ENCODE measurements at regions of chr1 and their contacts with region 1.

Region 1: DNA sequence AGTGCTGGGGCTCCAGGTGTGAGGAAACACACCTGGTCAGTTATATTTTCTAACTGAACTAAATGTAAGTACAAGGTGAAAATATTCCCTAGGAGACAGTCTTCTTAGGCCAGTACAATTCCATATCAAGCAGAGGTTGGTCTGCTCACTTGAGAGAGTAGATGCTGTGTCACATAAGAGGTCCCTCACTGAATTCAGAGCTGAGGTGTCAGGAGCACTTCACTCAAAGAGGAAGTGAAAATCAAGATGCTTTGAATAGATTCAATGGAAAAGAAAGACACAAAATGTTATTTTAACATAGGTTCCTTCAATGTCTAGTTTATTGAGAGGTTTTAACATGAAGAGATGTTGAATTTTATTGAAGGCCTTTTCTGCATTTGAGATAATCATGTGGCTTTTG is 4.3 kb upstream of the FCRL3 start:
- DNase-seq: no peak
- H3K4me3 ChIP-seq: no peak overlapping the region
- H3K27ac ChIP-seq: no peak overlapping the region
- H3K4me1 ChIP-seq: no peaks in the 10 kb centered on the region
- H3K27me3 ChIP-seq: peaks cover 9% of the 10 kb centered on the region; the same call in 1 of the 2 replicates
- CTCF ChIP-seq: no peak
- EP300 ChIP-seq: no peak
- RAD21 ChIP-seq: no peak

Region 2: DNA sequence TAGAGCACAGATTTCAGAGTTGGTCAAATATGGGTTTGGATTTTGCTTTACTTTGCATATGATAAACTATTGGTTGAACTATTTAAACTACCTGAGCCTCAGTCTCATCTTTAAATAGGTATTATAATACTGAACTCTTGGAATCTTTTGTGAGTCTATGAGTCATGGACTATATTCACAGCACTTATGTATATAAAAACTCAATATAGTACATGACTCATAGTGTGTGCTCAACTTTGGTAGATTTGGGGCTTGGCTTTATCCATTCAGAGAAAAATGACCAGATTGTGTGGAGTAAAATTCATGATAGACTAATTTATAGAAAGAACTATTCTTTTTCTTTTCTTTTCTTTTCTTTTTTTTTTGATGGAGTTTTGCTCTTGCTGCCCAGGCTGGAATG is 33.0 kb before region 1 on chr1:
- CTCF ChIA-PET with region 1: no interaction called
- POLR2A ChIA-PET with region 1: no interaction called
- DNase-seq: no peak
- H3K4me3 ChIP-seq: no peak overlapping the region
- H3K27ac ChIP-seq: no peak overlapping the region
- H3K4me1 ChIP-seq: no peaks in the 10 kb centered on the region
- H3K27me3 ChIP-seq: no peaks in the 10 kb centered on the region
- CTCF ChIP-seq: no peak
- EP300 ChIP-seq: no peak
- RAD21 ChIP-seq: no peak

Region 3: GRCh38 chr1:157691285-157691920 is 13.5 kb before region 1 on chr1:
- CTCF ChIA-PET with region 1: interaction called, 21 read pairs
- POLR2A ChIA-PET with region 1: no interaction called
- DNase-seq: peak; percentile 42
- H3K4me3 ChIP-seq: no peak overlapping the region
- H3K27ac ChIP-seq: no peak overlapping the region
- H3K4me1 ChIP-seq: no peaks in the 10 kb centered on the region; a peak in 1 of 4 replicates
- H3K27me3 ChIP-seq: peaks cover 5% of the 10 kb centered on the region
- CTCF ChIP-seq: peak; percentile 59
- EP300 ChIP-seq: no peak
- RAD21 ChIP-seq: peak; percentile 37

Region 4: GRCh38 chr1:157723157-157723556 is 18.3 kb after region 1 on chr1:
- CTCF ChIA-PET with region 1: no interaction called
- POLR2A ChIA-PET with region 1: no interaction called
- DNase-seq: no peak
- H3K4me3 ChIP-seq: no peak overlapping the region
- H3K27ac ChIP-seq: no peak overlapping the region
- H3K4me1 ChIP-seq: no peaks in the 10 kb centered on the region
- H3K27me3 ChIP-seq: no peaks in the 10 kb centered on the region
- CTCF ChIP-seq: no peak
- EP300 ChIP-seq: no peak
- RAD21 ChIP-seq: no peak

Region 5: DNA sequence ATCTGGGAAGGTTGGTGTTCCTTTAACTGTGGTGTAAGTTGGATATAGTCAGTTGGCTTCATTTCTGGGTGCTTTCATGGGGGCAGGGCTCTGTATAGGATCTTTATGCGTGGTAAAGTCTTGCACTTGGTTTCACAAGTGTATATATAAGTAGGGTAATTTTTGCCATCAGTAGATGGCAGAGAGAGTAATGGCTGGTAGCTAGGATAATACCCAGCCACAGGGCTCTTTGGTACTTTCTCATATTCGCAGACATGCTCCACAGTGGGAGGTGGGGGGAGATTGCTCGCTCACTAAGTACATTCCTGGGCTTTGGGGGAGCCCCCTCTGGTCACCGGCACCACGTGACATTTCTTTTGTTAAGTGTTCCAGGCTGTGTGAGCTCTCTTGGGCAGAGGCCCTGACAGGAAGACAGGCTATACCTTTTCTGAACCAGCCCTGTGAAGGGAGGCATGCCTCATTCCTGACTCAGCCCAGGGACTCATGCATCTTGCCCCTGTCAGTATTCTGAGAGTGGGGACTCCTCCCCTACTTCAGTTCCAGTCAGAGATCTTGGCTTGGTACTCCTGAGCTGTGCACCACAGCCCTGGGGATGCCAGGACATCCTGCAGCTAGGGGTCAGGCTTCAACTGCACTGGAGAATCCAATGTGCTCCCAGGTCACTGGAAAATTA is 34.5 kb after region 1 on chr1:
- CTCF ChIA-PET with region 1: no interaction called
- POLR2A ChIA-PET with region 1: no interaction called
- DNase-seq: no peak
- H3K4me3 ChIP-seq: no peak overlapping the region
- H3K27ac ChIP-seq: no peak overlapping the region
- H3K4me1 ChIP-seq: no peaks in the 10 kb centered on the region
- H3K27me3 ChIP-seq: no peaks in the 10 kb centered on the region
- CTCF ChIP-seq: no peak
- EP300 ChIP-seq: no peak
- RAD21 ChIP-seq: no peak

Region 6: DNA sequence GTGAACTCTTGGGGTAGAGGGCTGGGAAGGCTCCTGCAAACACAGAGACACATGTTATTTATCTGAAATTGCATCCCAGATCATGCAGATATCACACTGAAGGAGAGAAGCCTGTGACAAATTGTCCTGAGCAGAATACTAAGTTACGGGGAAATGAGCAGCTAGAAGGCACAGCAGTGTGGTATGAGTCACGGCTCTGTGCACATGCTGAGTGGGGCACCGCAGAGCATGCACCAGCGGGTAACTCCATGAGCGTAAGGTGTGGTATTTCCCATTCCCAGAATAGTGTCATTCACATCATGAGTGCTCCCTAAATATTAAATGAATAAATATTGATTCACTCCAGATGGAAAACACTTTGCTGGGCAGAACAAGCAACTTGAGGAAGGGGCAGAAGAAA is 93.3 kb after region 1 on chr1:
- CTCF ChIA-PET with region 1: no interaction called
- POLR2A ChIA-PET with region 1: no interaction called
- DNase-seq: no peak
- H3K4me3 ChIP-seq: no peak overlapping the region
- H3K27ac ChIP-seq: no peak overlapping the region
- H3K4me1 ChIP-seq: no peaks in the 10 kb centered on the region
- H3K27me3 ChIP-seq: no peaks in the 10 kb centered on the region; the same call in 1 of the 2 replicates
- CTCF ChIP-seq: no peak
- EP300 ChIP-seq: no peak
- RAD21 ChIP-seq: no peak

Measured in SK-N-SH (cell line).